ENCODE measurements at regions of chr9 and their contacts with region 1.

Region 1: GRCh38 chr9:125867751-125868415 is 120.7 kb downstream of the PBX3 start:
- DNase-seq: peak in 2 of 14 experiments; percentile 2 to 13
- ATAC-seq: no peak
- H3K4me3 ChIP-seq: no peak overlapping the region
- H3K4me3 Mint-ChIP-seq: no peak overlapping the region
- H3K27ac ChIP-seq: no peak overlapping the region
- H3K27ac Mint-ChIP-seq: no peak overlapping the region
- H3K4me1 ChIP-seq: peaks cover 2% of the 10 kb centered on the region
- H3K4me1 Mint-ChIP-seq: peaks cover 9% of the 10 kb centered on the region
- H3K27me3 ChIP-seq: no peaks in the 10 kb centered on the region
- H3K27me3 Mint-ChIP-seq: no peaks in the 10 kb centered on the region
- CTCF ChIP-seq: no peak

Region 2: DNA sequence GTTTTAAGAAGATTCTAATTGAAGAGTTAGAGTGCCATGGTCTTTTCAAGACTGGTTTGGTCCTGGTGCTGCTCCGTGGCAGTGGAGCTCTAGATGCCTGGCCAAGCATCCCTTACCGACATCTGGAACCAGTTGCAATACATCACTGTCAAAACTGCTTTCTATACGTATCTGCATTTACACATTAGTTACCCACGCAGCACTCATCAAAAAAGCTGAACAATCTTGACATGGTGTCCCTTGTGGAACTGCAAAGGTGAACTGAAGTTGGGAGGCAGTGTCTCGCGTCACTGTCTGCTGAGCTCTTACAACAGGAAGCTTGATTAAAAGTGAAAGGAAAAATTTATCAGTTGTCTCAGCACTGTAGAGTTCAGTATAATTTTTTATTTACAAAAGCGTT is 38.1 kb before region 1 on chr9:
- CTCF ChIA-PET with region 1: no interaction called
- POLR2A ChIA-PET with region 1: no interaction called
- intact Hi-C with region 1: loop called in 1 of 2 experiments (anchors 5 kb)
- DNase-seq: peak; percentile 24 to 86 (median 50)
- ATAC-seq: peak; percentile 94
- H3K4me3 ChIP-seq: peak overlapping the region; percentile 53
- H3K4me3 Mint-ChIP-seq: peak overlapping the region; percentile 91
- H3K27ac ChIP-seq: peak overlapping the region; percentile 66 to 68
- H3K27ac Mint-ChIP-seq: peak overlapping the region; percentile 99
- H3K4me1 ChIP-seq: peaks cover 10% of the 10 kb centered on the region
- H3K4me1 Mint-ChIP-seq: peaks cover 54% of the 10 kb centered on the region
- H3K27me3 ChIP-seq: no peaks in the 10 kb centered on the region
- H3K27me3 Mint-ChIP-seq: no peaks in the 10 kb centered on the region
- CTCF ChIP-seq: no peak

Measured in CD4-positive, alpha-beta T cell (primary cell).